A673 (cell line): ENCODE measurements at regions of chr14 and their contacts with region 1.

Region 1: DNA sequence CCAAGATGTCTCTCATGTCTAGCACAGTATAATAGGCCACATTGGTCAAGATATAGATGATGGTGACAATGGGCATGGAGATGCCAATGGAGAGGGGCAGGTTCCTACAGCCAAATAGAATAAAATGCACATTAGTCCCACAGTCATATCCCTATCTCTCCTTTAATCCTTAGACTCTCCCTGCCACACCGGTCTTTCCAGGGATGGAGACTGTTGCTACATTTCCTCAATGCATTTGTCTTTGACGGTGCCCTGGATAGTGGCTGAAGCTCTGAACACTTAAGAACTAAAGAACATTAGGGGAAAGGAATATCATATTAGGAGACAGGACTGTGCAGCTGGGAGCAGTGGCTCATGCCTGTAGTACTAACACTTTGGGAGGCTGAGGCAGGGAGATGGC is 9.7 kb downstream of the OXA1L start:
- DNase-seq: no peak
- H3K4me3 ChIP-seq: no peak overlapping the region
- H3K27ac ChIP-seq: no peak overlapping the region
- H3K4me1 ChIP-seq: peaks cover 4% of the 10 kb centered on the region
- H3K27me3 ChIP-seq: no peaks in the 10 kb centered on the region
- CTCF ChIP-seq: no peak

Region 2: DNA sequence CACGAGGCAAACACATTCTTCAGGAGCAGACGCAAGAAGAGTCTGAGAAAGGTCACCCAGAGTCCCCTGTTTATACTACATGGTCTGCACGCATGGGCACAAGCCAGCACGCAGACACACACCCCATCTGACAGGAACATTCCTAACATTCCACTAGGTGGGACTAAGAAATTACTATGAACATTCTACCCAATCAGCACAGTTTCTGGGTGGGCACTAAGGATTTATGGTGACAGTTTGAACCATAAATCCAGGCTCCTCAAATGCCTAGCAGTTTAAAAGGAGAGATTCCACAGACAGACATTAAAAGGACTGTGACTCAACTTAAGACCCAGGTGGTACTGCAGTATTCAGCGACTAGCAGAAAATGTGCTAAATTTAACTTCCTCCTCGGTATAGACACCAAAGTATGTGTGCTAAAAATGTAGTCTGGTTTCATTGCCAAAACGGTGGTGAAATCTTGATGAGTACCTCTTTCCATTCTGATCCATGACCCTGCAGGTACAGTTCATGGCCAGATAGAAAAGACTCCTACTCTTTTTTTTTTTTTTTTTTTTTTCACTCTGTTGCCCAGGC is 161.9 kb before region 1 on chr14:
- CTCF ChIA-PET with region 1: no interaction called
- POLR2A ChIA-PET with region 1: no interaction called
- intact Hi-C with region 1: no loop called
- DNase-seq: peak; percentile 85
- H3K4me3 ChIP-seq: no peak overlapping the region
- H3K27ac ChIP-seq: peak overlapping the region; percentile 52
- H3K4me1 ChIP-seq: peaks cover 13% of the 10 kb centered on the region
- H3K27me3 ChIP-seq: no peaks in the 10 kb centered on the region
- CTCF ChIP-seq: no peak

Region 3: DNA sequence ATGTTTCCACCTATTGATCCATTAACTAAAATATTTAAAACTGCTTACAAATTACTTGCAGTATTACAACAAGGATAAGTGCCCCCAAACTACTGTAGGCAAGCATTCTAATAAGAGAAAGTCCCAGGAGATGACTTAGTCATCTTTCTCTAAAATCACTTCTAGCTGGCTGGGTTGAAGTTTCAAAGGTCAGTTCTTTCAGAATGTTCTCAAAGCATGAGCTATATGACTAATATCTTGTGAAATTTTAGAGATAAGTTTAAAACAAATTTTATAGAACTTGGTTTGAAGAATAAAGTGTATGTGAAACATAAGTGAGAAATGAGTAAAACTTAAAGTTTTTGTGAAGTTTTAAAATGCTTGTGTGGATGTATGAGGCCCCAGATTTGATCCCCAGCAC is 107.8 kb before region 1 on chr14:
- CTCF ChIA-PET with region 1: no interaction called
- POLR2A ChIA-PET with region 1: no interaction called
- intact Hi-C with region 1: no loop called
- DNase-seq: no peak
- H3K4me3 ChIP-seq: no peak overlapping the region
- H3K27ac ChIP-seq: no peak overlapping the region
- H3K4me1 ChIP-seq: no peaks in the 10 kb centered on the region
- H3K27me3 ChIP-seq: no peaks in the 10 kb centered on the region
- CTCF ChIP-seq: no peak

Region 4: DNA sequence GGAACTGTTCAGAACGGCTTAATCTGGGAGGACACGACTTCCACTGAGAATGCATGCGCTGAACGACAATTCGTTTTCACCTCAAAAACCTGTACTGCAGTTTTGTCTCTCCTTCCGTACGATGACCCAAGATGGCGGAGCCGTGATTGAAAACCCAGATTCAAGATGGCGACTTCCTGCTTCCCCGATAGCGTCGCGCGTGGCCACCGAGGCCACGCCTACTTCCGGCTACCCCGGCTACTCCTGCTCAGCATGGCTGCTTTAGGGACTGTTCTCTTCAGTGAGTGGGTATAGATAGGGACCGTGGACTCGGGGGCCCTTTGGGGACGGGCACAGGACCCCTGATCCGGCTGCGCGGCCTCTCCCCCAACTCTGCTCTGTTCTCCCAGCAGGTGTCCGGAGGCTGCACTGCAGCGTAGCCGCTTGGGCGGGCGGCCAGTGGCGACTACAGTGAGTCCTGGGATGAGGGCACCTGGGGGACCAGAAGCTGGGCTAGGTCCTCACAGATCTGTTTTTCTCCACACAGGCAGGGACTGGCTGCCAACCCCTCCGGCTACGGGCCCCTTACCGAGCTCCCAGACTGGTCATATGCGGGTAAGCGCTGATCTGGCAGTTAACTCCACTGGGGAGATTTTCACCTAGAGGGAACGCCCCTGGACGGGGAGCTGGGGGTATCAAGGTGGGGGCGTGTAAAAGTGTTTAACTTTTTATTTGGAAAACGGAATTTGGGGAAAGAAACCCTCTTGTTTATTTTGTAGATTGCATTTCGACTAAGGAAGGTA is 53.6 kb after region 1 on chr14 and contains the start of gene MRPL52:
- CTCF ChIA-PET with region 1: no interaction called
- POLR2A ChIA-PET with region 1: interaction called, 17 read pairs
- intact Hi-C with region 1: no loop called
- DNase-seq: peak; percentile 95
- H3K4me3 ChIP-seq: peak within 1 kb of the TSS; percentile 91
- H3K27ac ChIP-seq: peak within 1 kb of the TSS; percentile 85
- H3K4me1 ChIP-seq: peaks cover 11% of the 10 kb centered on the region
- H3K27me3 ChIP-seq: no peaks in the 10 kb centered on the region
- CTCF ChIP-seq: no peak
- total RNA-seq, gene MRPL52: 169 and 187 TPM in 2 replicates

Region 5: GRCh38 chr14:22929104-22929847 is 153.1 kb after region 1 on chr14 and contains the start of gene PRMT5:
- CTCF ChIA-PET with region 1: no interaction called
- POLR2A ChIA-PET with region 1: no interaction called
- intact Hi-C with region 1: no loop called
- DNase-seq: peak; percentile 100
- H3K4me3 ChIP-seq: peak within 1 kb of the TSS; percentile 88
- H3K27ac ChIP-seq: peak within 1 kb of the TSS; percentile 87
- H3K4me1 ChIP-seq: peaks cover 16% of the 10 kb centered on the region
- H3K27me3 ChIP-seq: no peaks in the 10 kb centered on the region
- CTCF ChIP-seq: no peak
- total RNA-seq, gene PRMT5: 244 and 273 TPM in 2 replicates